B cell (primary cell): ENCODE measurements at regions of chr20 and their contacts with region 1.

Region 1: DNA sequence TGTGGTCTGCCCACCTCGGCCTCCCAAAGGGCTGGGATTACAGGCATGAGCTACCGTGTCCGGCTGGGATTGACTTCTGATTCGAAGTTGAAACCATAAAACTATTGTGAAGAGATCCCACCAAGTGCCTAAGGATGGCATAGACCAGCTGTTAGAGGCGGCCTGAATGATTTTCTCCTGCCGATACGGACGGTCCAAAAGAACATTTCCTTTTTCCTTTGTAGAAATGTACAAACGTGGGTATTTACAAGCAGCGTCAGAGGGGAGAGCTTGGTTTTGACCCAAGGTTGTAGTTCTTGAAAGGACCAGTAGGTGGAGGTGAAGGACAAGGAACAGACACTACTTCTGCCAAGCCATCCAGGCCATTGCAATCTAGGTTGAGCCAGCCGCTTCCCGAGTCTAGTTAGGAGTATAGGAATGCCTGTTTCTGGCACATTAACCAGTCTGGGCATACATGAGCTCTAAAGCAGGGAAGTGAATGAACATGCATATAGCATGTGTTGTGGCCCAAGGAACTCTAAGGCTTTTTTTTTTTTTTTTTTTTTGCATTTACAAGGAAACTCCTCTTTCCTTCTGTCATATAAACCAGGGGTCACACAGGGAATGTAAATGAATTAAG is 29.1 kb downstream of the MOCS3 start:
- DNase-seq: peak; percentile 86
- ATAC-seq: peak; percentile 99
- H3K4me3 ChIP-seq: no peak overlapping the region
- H3K4me3 Mint-ChIP-seq: no peak overlapping the region
- H3K27ac ChIP-seq: no peak overlapping the region
- H3K27ac Mint-ChIP-seq: peak overlapping the region; percentile 11
- H3K4me1 ChIP-seq: peaks cover 10 to 11% of the 10 kb centered on the region in 2 donors
- H3K4me1 Mint-ChIP-seq: peaks cover 12% of the 10 kb centered on the region
- H3K27me3 ChIP-seq: peaks cover 0 to 15% (median 4%) of the 10 kb centered on the region in 4 experiments
- H3K27me3 Mint-ChIP-seq: peaks cover 23% of the 10 kb centered on the region
- CTCF ChIP-seq: peak; percentile 87

Region 2: GRCh38 chr20:51076786-51077685 is 89.3 kb after region 1 on chr20:
- CTCF ChIA-PET with region 1: no interaction called
- POLR2A ChIA-PET with region 1: no interaction called
- intact Hi-C with region 1: no loop called
- DNase-seq: no peak
- ATAC-seq: no peak
- H3K4me3 ChIP-seq: no peak overlapping the region
- H3K4me3 Mint-ChIP-seq: no peak overlapping the region
- H3K27ac ChIP-seq: no peak overlapping the region
- H3K27ac Mint-ChIP-seq: no peak overlapping the region
- H3K4me1 ChIP-seq: peaks cover 9 to 10% of the 10 kb centered on the region in 2 donors
- H3K4me1 Mint-ChIP-seq: peaks cover 17% of the 10 kb centered on the region
- H3K27me3 ChIP-seq: peaks cover 0 to 18% (median 2%) of the 10 kb centered on the region in 4 experiments
- H3K27me3 Mint-ChIP-seq: peaks cover 42% of the 10 kb centered on the region
- CTCF ChIP-seq: no peak

Region 3: GRCh38 chr20:51300104-51300503 is 312.4 kb after region 1 on chr20:
- CTCF ChIA-PET with region 1: interaction called, 314 read pairs
- POLR2A ChIA-PET with region 1: no interaction called
- intact Hi-C with region 1: no loop called
- DNase-seq: no peak
- ATAC-seq: no peak
- H3K4me3 ChIP-seq: no peak overlapping the region
- H3K4me3 Mint-ChIP-seq: no peak overlapping the region
- H3K27ac ChIP-seq: no peak overlapping the region
- H3K27ac Mint-ChIP-seq: no peak overlapping the region
- H3K4me1 ChIP-seq: no peaks in the 10 kb centered on the region
- H3K4me1 Mint-ChIP-seq: no peaks in the 10 kb centered on the region
- H3K27me3 ChIP-seq: peaks cover 0 to 3% (median 0%) of the 10 kb centered on the region in 4 experiments
- H3K27me3 Mint-ChIP-seq: peaks cover 14% of the 10 kb centered on the region
- CTCF ChIP-seq: no peak

Region 4: GRCh38 chr20:51318058-51318895 is 330.6 kb after region 1 on chr20:
- CTCF ChIA-PET with region 1: interaction called, 25 read pairs
- POLR2A ChIA-PET with region 1: no interaction called
- intact Hi-C with region 1: no loop called
- DNase-seq: peak; percentile 52
- ATAC-seq: no peak
- H3K4me3 ChIP-seq: peak overlapping the region in 1 of 5 experiments; percentile 15
- H3K4me3 Mint-ChIP-seq: no peak overlapping the region
- H3K27ac ChIP-seq: no peak overlapping the region
- H3K27ac Mint-ChIP-seq: no peak overlapping the region
- H3K4me1 ChIP-seq: no peaks in the 10 kb centered on the region
- H3K4me1 Mint-ChIP-seq: no peaks in the 10 kb centered on the region
- H3K27me3 ChIP-seq: peaks cover 0 to 19% (median 0%) of the 10 kb centered on the region in 4 experiments
- H3K27me3 Mint-ChIP-seq: peaks cover 18% of the 10 kb centered on the region
- CTCF ChIP-seq: peak; percentile 40

Region 5: GRCh38 chr20:51372176-51372803 is 384.6 kb after region 1 on chr20:
- CTCF ChIA-PET with region 1: interaction called, 12 read pairs
- POLR2A ChIA-PET with region 1: no interaction called
- intact Hi-C with region 1: no loop called
- DNase-seq: peak; percentile 69
- ATAC-seq: peak; percentile 68
- H3K4me3 ChIP-seq: no peak overlapping the region
- H3K4me3 Mint-ChIP-seq: no peak overlapping the region
- H3K27ac ChIP-seq: no peak overlapping the region
- H3K27ac Mint-ChIP-seq: no peak overlapping the region
- H3K4me1 ChIP-seq: peaks cover 0 to 6% of the 10 kb centered on the region in 2 donors
- H3K4me1 Mint-ChIP-seq: peaks cover 3% of the 10 kb centered on the region
- H3K27me3 ChIP-seq: peaks cover 0 to 4% (median 0%) of the 10 kb centered on the region in 4 experiments
- H3K27me3 Mint-ChIP-seq: peaks cover 5% of the 10 kb centered on the region
- CTCF ChIP-seq: peak; percentile 75

Region 6: DNA sequence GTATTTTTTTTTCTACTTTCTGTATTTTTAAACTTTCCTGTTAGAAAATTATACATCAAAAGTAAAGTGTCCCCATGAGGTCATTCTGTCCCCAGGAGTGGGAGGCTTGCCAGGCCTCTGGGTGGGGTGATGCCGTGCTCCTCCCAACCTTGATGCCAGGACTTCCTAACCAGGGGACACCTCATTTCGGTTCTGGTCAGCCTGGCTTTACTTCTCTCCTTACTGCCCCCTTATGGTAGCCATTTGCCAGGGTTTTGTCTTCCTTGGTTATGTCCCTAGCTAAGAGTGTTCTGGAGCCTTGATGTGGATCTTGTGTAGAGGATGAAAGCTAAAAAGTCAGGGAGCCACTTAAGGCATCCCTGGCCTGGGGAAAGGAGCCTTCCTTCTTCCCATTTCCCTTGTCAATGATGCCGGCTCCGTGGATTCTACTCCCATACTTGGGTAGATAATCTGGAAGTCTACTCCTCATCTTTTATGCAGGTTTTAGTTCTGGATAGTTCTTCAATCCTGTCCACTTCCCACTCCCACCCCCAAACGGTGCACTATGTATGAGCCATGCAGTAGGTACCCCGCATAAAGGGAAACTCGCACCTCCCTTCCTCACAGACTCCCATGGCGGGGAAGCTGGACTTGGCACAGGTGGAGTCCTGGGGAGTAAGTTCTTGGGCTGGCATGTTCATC is 978.7 kb after region 1 on chr20:
- CTCF ChIA-PET with region 1: interaction called, 5 read pairs
- POLR2A ChIA-PET with region 1: no interaction called
- intact Hi-C with region 1: loop called (anchors 5 kb)
- DNase-seq: peak; percentile 8
- ATAC-seq: no peak
- H3K4me3 ChIP-seq: no peak overlapping the region
- H3K4me3 Mint-ChIP-seq: no peak overlapping the region
- H3K27ac ChIP-seq: no peak overlapping the region
- H3K27ac Mint-ChIP-seq: no peak overlapping the region
- H3K4me1 ChIP-seq: no peaks in the 10 kb centered on the region
- H3K4me1 Mint-ChIP-seq: no peaks in the 10 kb centered on the region
- H3K27me3 ChIP-seq: no peaks in the 10 kb centered on the region
- H3K27me3 Mint-ChIP-seq: peaks cover 3% of the 10 kb centered on the region
- CTCF ChIP-seq: peak; percentile 20

Region 7: DNA sequence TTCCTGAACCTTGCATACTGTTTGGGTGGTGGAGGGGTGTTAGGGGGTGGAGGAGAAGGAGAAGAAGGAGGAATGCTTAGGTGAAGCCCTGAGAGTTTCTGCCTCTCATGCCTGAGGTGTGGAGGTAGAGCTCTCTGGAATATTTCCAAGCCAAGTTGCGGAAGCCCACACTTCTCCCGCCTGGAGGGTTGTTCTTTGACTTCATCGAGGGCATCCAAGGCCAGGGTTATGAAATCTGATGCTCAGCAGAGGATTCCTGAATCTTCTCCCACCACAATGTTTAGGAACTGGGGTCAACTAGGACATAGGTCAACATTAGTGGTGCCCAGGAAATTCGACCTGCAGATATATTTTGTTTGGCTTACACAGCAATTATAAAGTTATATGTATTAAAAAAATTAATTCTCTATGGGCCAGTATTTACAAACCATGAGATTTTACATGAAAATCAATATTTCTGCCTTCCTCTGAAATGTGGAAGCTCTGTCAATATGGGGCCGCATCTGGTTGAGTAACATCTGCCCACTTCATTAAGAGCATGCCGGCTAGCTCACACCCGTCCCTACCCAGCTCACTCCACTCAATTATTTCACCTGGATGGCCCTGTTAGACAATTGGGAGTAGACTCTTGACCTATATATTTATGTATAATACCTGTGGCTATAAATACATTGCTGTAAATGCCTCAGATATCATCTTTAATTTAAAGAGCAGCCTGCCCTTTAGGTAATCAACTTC is 1461.0 kb after region 1 on chr20:
- CTCF ChIA-PET with region 1: no interaction called
- POLR2A ChIA-PET with region 1: no interaction called
- intact Hi-C with region 1: no loop called
- DNase-seq: no peak
- ATAC-seq: no peak
- H3K4me3 ChIP-seq: no peak overlapping the region
- H3K4me3 Mint-ChIP-seq: no peak overlapping the region
- H3K27ac ChIP-seq: no peak overlapping the region
- H3K27ac Mint-ChIP-seq: no peak overlapping the region
- H3K4me1 ChIP-seq: no peaks in the 10 kb centered on the region
- H3K4me1 Mint-ChIP-seq: no peaks in the 10 kb centered on the region
- H3K27me3 ChIP-seq: no peaks in the 10 kb centered on the region
- H3K27me3 Mint-ChIP-seq: peaks cover 2% of the 10 kb centered on the region
- CTCF ChIP-seq: no peak